OCI-LY7 (cell line): ENCODE measurements at regions of chr6 and their contacts with region 1.

Region 1: GRCh38 chr6:93419304-93420162 is at the start of gene EPHA7:
- DNase-seq: no peak
- H3K4me3 ChIP-seq: no peak within 1 kb of the TSS
- H3K27ac ChIP-seq: no peak within 1 kb of the TSS
- H3K4me1 ChIP-seq: no peaks in the 10 kb centered on the region
- CTCF ChIP-seq: no peak
- total RNA-seq, gene EPHA7: not detected in 2 replicates

Region 2: GRCh38 chr6:93036835-93037234 is 382.7 kb before region 1 on chr6:
- CTCF ChIA-PET with region 1: no interaction called
- POLR2A ChIA-PET with region 1: no interaction called
- intact Hi-C with region 1: loop called (anchors 5 kb)
- DNase-seq: peak; percentile 32
- H3K4me3 ChIP-seq: no peak overlapping the region
- H3K27ac ChIP-seq: no peak overlapping the region
- H3K4me1 ChIP-seq: no peaks in the 10 kb centered on the region
- CTCF ChIP-seq: peak; percentile 74

Region 3: GRCh38 chr6:93624408-93624807 is 204.9 kb after region 1 on chr6:
- CTCF ChIA-PET with region 1: no interaction called
- POLR2A ChIA-PET with region 1: no interaction called
- intact Hi-C with region 1: no loop called
- DNase-seq: no peak
- H3K4me3 ChIP-seq: no peak overlapping the region
- H3K27ac ChIP-seq: no peak overlapping the region
- H3K4me1 ChIP-seq: no peaks in the 10 kb centered on the region
- CTCF ChIP-seq: no peak